ENCODE measurements at regions of chr11 and their contacts with region 1.

Region 1: GRCh38 chr11:69654569-69655327 is 13.8 kb downstream of the CCND1 start:
- DNase-seq: peak; percentile 59
- H3K4me3 ChIP-seq: no peak overlapping the region
- H3K27ac ChIP-seq: peak overlapping the region in 1 of 2 experiments; percentile 22; a peak in 3 of 4 replicates
- H3K4me1 ChIP-seq: peaks cover 8 to 27% of the 10 kb centered on the region in 2 experiments; a peak in 2 of 4 replicates
- H3K27me3 ChIP-seq: no peaks in the 10 kb centered on the region
- CTCF ChIP-seq: no peak
- EP300 ChIP-seq: no peak
- RAD21 ChIP-seq: no peak

Region 2: DNA sequence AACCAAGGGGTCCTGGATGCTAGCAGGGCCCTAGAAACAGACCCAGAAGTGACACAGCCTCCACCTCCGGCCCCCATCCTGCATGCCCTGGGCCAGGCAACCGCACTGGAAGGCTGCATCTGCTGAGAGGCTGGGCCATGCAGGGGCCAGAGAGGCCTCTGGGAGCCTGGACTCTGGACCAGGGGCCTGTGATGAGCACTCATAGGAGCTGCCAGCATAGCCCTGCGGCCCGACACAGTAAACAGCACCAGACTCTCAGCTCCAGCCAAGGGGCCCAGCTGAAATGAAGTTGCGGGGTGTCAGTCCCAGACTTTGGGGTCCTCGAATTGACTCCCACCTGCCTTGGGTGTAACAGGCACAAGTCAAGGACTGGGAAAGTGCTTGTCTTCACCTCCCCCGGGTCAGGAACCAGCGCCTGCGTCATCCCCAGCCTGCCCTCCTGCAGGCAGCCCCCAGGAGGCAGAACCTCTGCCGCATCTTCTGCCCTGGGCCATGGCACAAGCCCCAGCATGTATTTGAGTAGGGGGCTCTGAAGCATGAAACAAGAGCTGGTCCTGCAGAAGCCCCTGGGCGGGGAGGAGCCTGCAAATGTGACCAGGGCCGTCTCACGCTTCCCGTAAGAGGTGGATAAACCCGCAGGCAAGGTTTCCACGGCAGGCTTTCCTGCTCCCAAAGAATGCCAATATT is 39.0 kb before region 1 on chr11:
- CTCF ChIA-PET with region 1: no interaction called
- POLR2A ChIA-PET with region 1: no interaction called
- DNase-seq: no peak
- H3K4me3 ChIP-seq: no peak overlapping the region
- H3K27ac ChIP-seq: no peak overlapping the region
- H3K4me1 ChIP-seq: peaks cover 0 to 7% of the 10 kb centered on the region in 2 experiments; a peak in 1 of 4 replicates
- H3K27me3 ChIP-seq: no peaks in the 10 kb centered on the region
- CTCF ChIP-seq: no peak
- EP300 ChIP-seq: no peak
- RAD21 ChIP-seq: no peak

Region 3: GRCh38 chr11:69670158-69670845 is 15.6 kb after region 1 on chr11:
- CTCF ChIA-PET with region 1: interaction called, 80 read pairs
- POLR2A ChIA-PET with region 1: interaction called, 3 read pairs
- DNase-seq: peak; percentile 93
- H3K4me3 ChIP-seq: no peak overlapping the region; a peak in 1 of 4 replicates
- H3K27ac ChIP-seq: peak overlapping the region; percentile 20 to 39; a peak in 2 of 4 replicates
- H3K4me1 ChIP-seq: peaks cover 8 to 20% of the 10 kb centered on the region in 2 experiments; a peak in 3 of 4 replicates
- H3K27me3 ChIP-seq: no peaks in the 10 kb centered on the region
- CTCF ChIP-seq: peak; percentile 94
- EP300 ChIP-seq: no peak
- RAD21 ChIP-seq: peak; percentile 91

Measured in SK-N-SH (cell line).